ENCODE measurements at regions of chr11 and their contacts with region 1.

Region 1: GRCh38 chr11:95067039-95067840 is 521 bp downstream of the SRSF8 start:
- DNase-seq: peak; percentile 83 to 89 (median 88)
- ATAC-seq: peak; percentile 84
- H3K4me3 ChIP-seq: peak overlapping the region; percentile 84
- H3K4me1 ChIP-seq: peaks cover 7% of the 10 kb centered on the region
- CTCF ChIP-seq: peak; percentile 41

Region 2: GRCh38 chr11:95100856-95101507 is 33.7 kb after region 1 on chr11:
- intact Hi-C with region 1: no loop called
- DNase-seq: no peak
- ATAC-seq: no peak
- H3K4me3 ChIP-seq: no peak overlapping the region
- H3K4me1 ChIP-seq: peaks cover 11% of the 10 kb centered on the region
- CTCF ChIP-seq: no peak

Region 3: GRCh38 chr11:95138448-95138847 is 71.2 kb after region 1 on chr11:
- intact Hi-C with region 1: loop called in 1 of 2 experiments (anchors 5 kb)
- DNase-seq: no peak
- ATAC-seq: peak; percentile 79
- H3K4me3 ChIP-seq: no peak overlapping the region
- H3K4me1 ChIP-seq: no peaks in the 10 kb centered on the region
- CTCF ChIP-seq: no peak

Region 4: GRCh38 chr11:95318498-95318897 is 251.3 kb after region 1 on chr11:
- intact Hi-C with region 1: no loop called
- DNase-seq: no peak
- ATAC-seq: no peak
- H3K4me3 ChIP-seq: no peak overlapping the region
- H3K4me1 ChIP-seq: no peaks in the 10 kb centered on the region
- CTCF ChIP-seq: no peak

Measured in mucosa of descending colon (tissue), 3 donors.